MCF 10A (cell line): ENCODE measurements at regions of chr3 and their contacts with region 1.

Region 1: GRCh38 chr3:4493014-4493940 is at the start of gene ITPR1:
- DNase-seq: peak; percentile 98
- H3K4me3 Mint-ChIP-seq: peak within 1 kb of the TSS; percentile 85
- H3K27ac Mint-ChIP-seq: peak within 1 kb of the TSS; percentile 64
- H3K4me1 Mint-ChIP-seq: peaks cover 6% of the 10 kb centered on the region
- H3K27me3 Mint-ChIP-seq: no peaks in the 10 kb centered on the region
- CTCF ChIP-seq: no peak
- total RNA-seq, gene ITPR1: 7.5 and 14.3 TPM in 2 replicates

Region 2: GRCh38 chr3:4207672-4208071 is 285.6 kb before region 1 on chr3:
- CTCF ChIA-PET with region 1: no interaction called
- POLR2A ChIA-PET with region 1: no interaction called
- intact Hi-C with region 1: no loop called
- DNase-seq: no peak
- H3K4me3 Mint-ChIP-seq: no peak overlapping the region
- H3K27ac Mint-ChIP-seq: no peak overlapping the region
- H3K4me1 Mint-ChIP-seq: no peaks in the 10 kb centered on the region
- H3K27me3 Mint-ChIP-seq: no peaks in the 10 kb centered on the region
- CTCF ChIP-seq: no peak

Region 3: DNA sequence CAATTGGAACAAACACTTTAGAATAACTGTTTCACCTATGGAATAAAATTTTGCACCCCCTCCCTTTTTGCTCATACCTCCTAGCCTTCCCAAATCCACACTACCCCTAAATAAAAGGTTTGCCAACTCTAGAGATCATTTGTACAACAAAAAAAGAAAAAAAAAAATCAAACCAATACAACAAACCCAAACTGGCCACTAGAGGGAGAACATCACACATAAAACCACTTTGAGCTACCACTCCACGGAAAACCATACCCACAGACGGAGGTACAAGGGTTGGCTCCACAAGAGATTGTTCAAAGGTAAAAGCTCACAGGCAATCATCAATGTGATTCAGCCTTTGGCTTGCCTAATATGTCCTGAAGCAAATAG is 142.5 kb before region 1 on chr3:
- CTCF ChIA-PET with region 1: interaction called, 4 read pairs
- POLR2A ChIA-PET with region 1: interaction called, 8 read pairs
- intact Hi-C with region 1: loop called (anchors 2 kb)
- DNase-seq: peak; percentile 68
- H3K4me3 Mint-ChIP-seq: no peak overlapping the region
- H3K27ac Mint-ChIP-seq: no peak overlapping the region
- H3K4me1 Mint-ChIP-seq: peaks cover 7% of the 10 kb centered on the region
- H3K27me3 Mint-ChIP-seq: no peaks in the 10 kb centered on the region
- CTCF ChIP-seq: peak; percentile 67

Region 4: DNA sequence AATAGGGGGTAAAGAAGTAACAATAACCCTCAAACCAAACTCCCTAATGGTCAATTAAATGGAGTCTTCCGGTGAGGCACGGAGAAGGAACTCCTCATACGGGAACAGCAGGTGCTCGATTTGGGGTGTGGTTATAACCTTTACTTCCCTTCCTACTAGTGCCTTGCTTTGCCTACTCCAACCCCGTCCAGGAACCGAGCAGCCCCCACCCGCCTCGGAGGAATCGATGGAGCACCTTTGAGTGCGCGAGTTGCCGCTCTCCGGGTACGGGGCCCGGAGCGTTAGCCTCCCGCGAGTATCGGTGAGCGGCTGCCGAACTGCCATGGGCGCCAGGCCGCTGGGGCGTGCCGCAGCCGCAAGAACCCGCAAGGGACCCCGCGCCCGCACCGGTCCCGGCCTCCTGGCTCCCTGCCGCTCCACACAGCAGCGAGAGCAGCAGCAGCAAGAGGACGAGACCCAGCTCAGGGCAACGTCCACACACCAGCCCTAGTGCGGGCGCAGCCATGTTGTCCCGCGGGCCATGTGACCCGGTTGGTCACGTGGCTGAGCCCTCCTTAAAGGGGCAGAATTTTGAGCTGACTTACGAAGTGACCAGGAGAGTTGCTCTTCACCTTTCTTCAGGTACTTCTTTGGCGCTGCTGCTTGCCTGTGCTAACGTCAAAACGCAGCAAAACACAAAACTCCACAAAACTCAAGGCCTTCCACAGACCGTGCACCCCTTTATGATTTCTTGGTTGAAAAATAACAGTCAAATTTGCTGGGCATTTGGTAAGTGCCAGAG is 26.3 kb before region 1 on chr3 and contains the start of gene SUMF1:
- CTCF ChIA-PET with region 1: interaction called, 3 read pairs
- POLR2A ChIA-PET with region 1: interaction called, 22 read pairs
- intact Hi-C with region 1: loop called (anchors 1 kb)
- DNase-seq: peak; percentile 83
- H3K4me3 Mint-ChIP-seq: peak within 1 kb of the TSS; percentile 86
- H3K27ac Mint-ChIP-seq: peak within 1 kb of the TSS; percentile 94
- H3K4me1 Mint-ChIP-seq: peaks cover 7% of the 10 kb centered on the region
- H3K27me3 Mint-ChIP-seq: peaks cover 2% of the 10 kb centered on the region
- CTCF ChIP-seq: no peak
- total RNA-seq, gene SUMF1: 11.8 and 18.9 TPM in 2 replicates

Region 5: DNA sequence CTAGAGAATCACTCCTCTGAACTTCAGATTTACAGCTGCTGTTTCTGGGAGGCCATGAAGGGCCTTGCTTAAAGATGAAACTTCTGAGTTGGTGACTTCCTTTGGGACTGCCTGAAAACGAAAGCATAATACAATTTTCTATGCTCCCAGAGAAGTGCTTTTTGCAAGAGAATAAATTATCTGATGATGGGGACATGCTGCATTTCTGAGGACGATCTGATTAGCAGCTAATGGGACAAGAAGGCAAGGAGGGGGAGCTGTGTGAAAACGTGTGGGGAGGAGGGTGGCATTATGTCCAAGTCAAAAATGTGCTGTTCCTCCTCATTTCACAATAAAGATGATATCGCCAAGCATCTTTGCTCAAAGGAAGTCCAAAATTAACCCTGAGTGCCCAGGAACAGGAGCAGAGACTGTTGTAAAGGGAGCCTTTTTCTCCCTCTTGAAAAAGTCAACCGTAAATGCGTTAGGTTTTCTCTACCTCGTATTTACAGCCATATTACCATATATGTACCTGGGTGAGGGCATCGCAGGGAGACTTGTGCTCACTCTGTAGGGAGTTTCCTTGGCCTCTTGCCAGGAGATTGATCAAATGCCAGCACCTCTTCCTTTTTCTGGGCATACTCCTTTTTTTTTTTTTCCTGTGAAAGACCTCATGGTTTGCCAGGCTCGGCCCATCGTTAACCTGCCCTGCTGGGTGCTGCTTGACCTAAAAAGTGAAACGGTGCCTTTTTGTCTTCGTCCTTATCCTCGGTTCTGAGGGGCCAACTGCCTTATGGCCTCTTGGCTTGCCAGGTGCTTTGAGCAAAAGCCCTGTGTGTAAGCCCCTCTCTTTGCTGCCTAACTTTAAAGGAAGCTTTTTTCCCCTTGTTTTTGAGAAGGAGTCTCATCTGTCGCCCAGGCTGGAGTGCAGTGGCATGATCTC is 11.3 kb after region 1 on chr3:
- CTCF ChIA-PET with region 1: interaction called, 7 read pairs
- POLR2A ChIA-PET with region 1: interaction called, 18 read pairs
- intact Hi-C with region 1: no loop called
- DNase-seq: peak; percentile 69
- H3K4me3 Mint-ChIP-seq: no peak overlapping the region
- H3K27ac Mint-ChIP-seq: peak overlapping the region; percentile 61
- H3K4me1 Mint-ChIP-seq: peaks cover 19% of the 10 kb centered on the region
- H3K27me3 Mint-ChIP-seq: no peaks in the 10 kb centered on the region
- CTCF ChIP-seq: no peak

Region 6: GRCh38 chr3:4584456-4585249 is 91.4 kb after region 1 on chr3:
- CTCF ChIA-PET with region 1: interaction called, 7 read pairs
- POLR2A ChIA-PET with region 1: interaction called, 28 read pairs
- intact Hi-C with region 1: loop called (anchors 5 kb)
- DNase-seq: no peak
- H3K4me3 Mint-ChIP-seq: peak overlapping the region; percentile 60
- H3K27ac Mint-ChIP-seq: peak overlapping the region; percentile 89
- H3K4me1 Mint-ChIP-seq: peaks cover 38% of the 10 kb centered on the region
- H3K27me3 Mint-ChIP-seq: no peaks in the 10 kb centered on the region
- CTCF ChIP-seq: no peak